Common myeloid progenitor, CD34-positive (primary cell): ENCODE measurements at regions of chr14 and their contacts with region 1.

Region 1: DNA sequence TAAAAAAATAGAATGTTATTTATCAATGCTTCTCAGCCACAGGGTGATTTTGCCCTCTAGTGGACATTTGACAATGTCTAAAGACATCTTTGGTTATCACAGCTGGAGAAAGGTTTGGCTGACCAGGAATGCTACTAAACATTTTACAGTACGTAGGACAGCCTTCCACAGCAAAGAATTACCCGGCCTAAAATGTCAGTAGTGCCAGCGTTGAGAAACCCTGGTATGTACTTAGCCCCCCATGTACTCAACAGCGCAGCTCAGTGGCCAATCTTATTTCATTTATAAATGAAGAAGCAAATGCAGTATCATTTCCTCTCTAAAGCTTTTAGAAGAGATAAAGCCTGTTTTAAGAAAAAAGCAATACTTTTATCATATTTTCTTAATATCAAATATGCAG is 5.8 kb downstream of the MARK3 start:
- DNase-seq: peak; percentile 81 to 89 (median 88)
- H3K4me3 ChIP-seq: no peak overlapping the region
- H3K27ac ChIP-seq: no peak overlapping the region
- H3K4me1 ChIP-seq: peaks cover 7 to 50% (median 37%) of the 10 kb centered on the region in 4 experiments
- H3K27me3 ChIP-seq: no peaks in the 10 kb centered on the region

Region 2: GRCh38 chr14:103207029-103207387 is 184.0 kb before region 1 on chr14:
- CTCF ChIA-PET with region 1: no interaction called
- POLR2A ChIA-PET with region 1: no interaction called
- DNase-seq: no peak
- H3K4me3 ChIP-seq: peak overlapping the region in 1 of 7 experiments; percentile 10
- H3K27ac ChIP-seq: peak overlapping the region in 1 of 2 experiments; percentile 68
- H3K4me1 ChIP-seq: peaks cover 0 to 5% (median 2%) of the 10 kb centered on the region in 4 experiments
- H3K27me3 ChIP-seq: peaks cover 0 to 70% (median 15%) of the 10 kb centered on the region in 5 experiments

Region 3: GRCh38 chr14:103343905-103344797 is 46.9 kb before region 1 on chr14:
- CTCF ChIA-PET with region 1: interaction called, 10 read pairs
- POLR2A ChIA-PET with region 1: interaction called, 4 read pairs
- DNase-seq: no peak
- H3K4me3 ChIP-seq: no peak overlapping the region
- H3K27ac ChIP-seq: no peak overlapping the region
- H3K4me1 ChIP-seq: no peaks in the 10 kb centered on the region
- H3K27me3 ChIP-seq: no peaks in the 10 kb centered on the region

Region 4: GRCh38 chr14:103356024-103356682 is 34.9 kb before region 1 on chr14:
- CTCF ChIA-PET with region 1: interaction called, 10 read pairs
- POLR2A ChIA-PET with region 1: no interaction called
- DNase-seq: no peak
- H3K4me3 ChIP-seq: no peak overlapping the region
- H3K27ac ChIP-seq: no peak overlapping the region
- H3K4me1 ChIP-seq: peaks cover 0 to 9% (median 6%) of the 10 kb centered on the region in 4 experiments
- H3K27me3 ChIP-seq: no peaks in the 10 kb centered on the region

Region 5: GRCh38 chr14:103401223-103402214 is 10.5 kb after region 1 on chr14:
- CTCF ChIA-PET with region 1: interaction called, 37 read pairs
- POLR2A ChIA-PET with region 1: no interaction called
- DNase-seq: peak in 1 of 3 donors; percentile 35
- H3K4me3 ChIP-seq: no peak overlapping the region
- H3K27ac ChIP-seq: peak overlapping the region in 1 of 2 experiments; percentile 45
- H3K4me1 ChIP-seq: peaks cover 8 to 38% (median 24%) of the 10 kb centered on the region in 4 experiments
- H3K27me3 ChIP-seq: no peaks in the 10 kb centered on the region

Region 6: GRCh38 chr14:103418481-103418818 is 27.4 kb after region 1 on chr14:
- CTCF ChIA-PET with region 1: interaction called, 10 read pairs
- POLR2A ChIA-PET with region 1: interaction called, 3 read pairs
- DNase-seq: peak in 2 of 3 donors; percentile 26 to 34
- H3K4me3 ChIP-seq: peak overlapping the region in 2 of 7 experiments; percentile 6 to 13
- H3K27ac ChIP-seq: peak overlapping the region in 1 of 2 experiments; percentile 22
- H3K4me1 ChIP-seq: peaks cover 4 to 22% (median 7%) of the 10 kb centered on the region in 4 experiments
- H3K27me3 ChIP-seq: no peaks in the 10 kb centered on the region